Transverse colon (tissue), 4 donors: ENCODE measurements at regions of chr6 and their contacts with region 1.

Region 1: GRCh38 chr6:153032255-153032882 is 29.9 kb upstream of the MTRF1L start:
- DNase-seq: no peak
- H3K4me3 ChIP-seq: no peak overlapping the region
- H3K27ac ChIP-seq: no peak overlapping the region
- H3K4me1 ChIP-seq: peaks cover 0 to 9% (median 0%) of the 10 kb centered on the region in 4 donors
- H3K27me3 ChIP-seq: no peaks in the 10 kb centered on the region
- CTCF ChIP-seq: peak; percentile 29 to 52 (median 39)
- EP300 ChIP-seq: no peak
- POLR2A ChIP-seq: no peak

Region 2: GRCh38 chr6:152765331-152765730 is 267.0 kb before region 1 on chr6:
- in situ Hi-C with region 1: no loop called
- intact Hi-C with region 1: no loop called
- DNase-seq: no peak
- H3K4me3 ChIP-seq: no peak overlapping the region
- H3K27ac ChIP-seq: no peak overlapping the region
- H3K4me1 ChIP-seq: no peaks in the 10 kb centered on the region
- H3K27me3 ChIP-seq: no peaks in the 10 kb centered on the region
- CTCF ChIP-seq: no peak
- EP300 ChIP-seq: no peak
- POLR2A ChIP-seq: no peak

Region 3: GRCh38 chr6:153210083-153210482 is 177.7 kb after region 1 on chr6:
- in situ Hi-C with region 1: no loop called
- intact Hi-C with region 1: no loop called
- DNase-seq: no peak
- H3K4me3 ChIP-seq: no peak overlapping the region
- H3K27ac ChIP-seq: no peak overlapping the region
- H3K4me1 ChIP-seq: no peaks in the 10 kb centered on the region
- H3K27me3 ChIP-seq: no peaks in the 10 kb centered on the region
- CTCF ChIP-seq: no peak
- EP300 ChIP-seq: no peak
- POLR2A ChIP-seq: no peak

Region 4: GRCh38 chr6:153484056-153484455 is 451.7 kb after region 1 on chr6:
- in situ Hi-C with region 1: loop called in 2 of 4 experiments (anchors 25 kb)
- intact Hi-C with region 1: no loop called
- DNase-seq: no peak
- H3K4me3 ChIP-seq: no peak overlapping the region
- H3K27ac ChIP-seq: no peak overlapping the region
- H3K4me1 ChIP-seq: no peaks in the 10 kb centered on the region
- H3K27me3 ChIP-seq: no peaks in the 10 kb centered on the region
- CTCF ChIP-seq: no peak
- EP300 ChIP-seq: no peak
- POLR2A ChIP-seq: no peak

Region 5: GRCh38 chr6:153511896-153512496 is 479.6 kb after region 1 on chr6:
- in situ Hi-C with region 1: loop called in 1 of 4 experiments (anchors 25 kb)
- intact Hi-C with region 1: no loop called
- DNase-seq: no peak
- H3K4me3 ChIP-seq: no peak overlapping the region
- H3K27ac ChIP-seq: no peak overlapping the region
- H3K4me1 ChIP-seq: no peaks in the 10 kb centered on the region
- H3K27me3 ChIP-seq: no peaks in the 10 kb centered on the region
- CTCF ChIP-seq: peak; percentile 22 to 63 (median 56)
- EP300 ChIP-seq: no peak
- POLR2A ChIP-seq: no peak